Activated CD8-positive, alpha-beta T cell treated with anti-CD3 and anti-CD28 coated beads for 36 hours (primary cell): ENCODE measurements at regions of chr9 and their contacts with region 1.

Region 1: GRCh38 chr9:76302947-76303940 is 91.0 kb downstream of the RFK start:
- DNase-seq: peak; percentile 22
- ATAC-seq: peak; percentile 58
- H3K4me3 Mint-ChIP-seq: no peak overlapping the region
- H3K27ac Mint-ChIP-seq: no peak overlapping the region
- H3K4me1 Mint-ChIP-seq: no peaks in the 10 kb centered on the region
- H3K27me3 Mint-ChIP-seq: peaks cover 9% of the 10 kb centered on the region
- CTCF ChIP-seq: peak; percentile 73

Region 2: DNA sequence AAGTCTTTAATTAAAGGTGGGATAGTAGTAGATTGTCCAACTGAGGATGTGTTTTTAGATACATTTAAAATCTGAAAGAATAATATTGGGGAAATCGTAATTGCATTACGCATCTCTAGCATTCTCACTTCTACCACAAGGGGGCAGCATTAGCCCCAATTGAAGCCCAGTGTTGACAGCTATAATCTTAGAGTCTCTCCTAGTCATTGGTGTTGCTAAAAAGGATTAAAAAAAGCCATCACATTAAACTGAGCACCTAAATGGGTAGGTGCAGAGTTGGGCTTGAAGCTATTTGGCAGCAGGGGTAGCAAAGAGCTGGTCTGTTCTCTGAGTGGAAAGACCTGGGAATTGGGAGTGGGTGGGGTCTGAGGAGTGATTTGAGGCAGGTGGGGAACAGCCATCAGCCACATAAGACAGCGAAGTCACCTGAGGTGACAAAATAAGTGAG is 1037.7 kb before region 1 on chr9:
- CTCF ChIA-PET with region 1: interaction called, 14 read pairs
- POLR2A ChIA-PET with region 1: no interaction called
- intact Hi-C with region 1: loop called (anchors 5 kb)
- DNase-seq: peak; percentile 68
- ATAC-seq: peak; percentile 64
- H3K4me3 Mint-ChIP-seq: no peak overlapping the region
- H3K27ac Mint-ChIP-seq: no peak overlapping the region
- H3K4me1 Mint-ChIP-seq: no peaks in the 10 kb centered on the region
- H3K27me3 Mint-ChIP-seq: no peaks in the 10 kb centered on the region
- CTCF ChIP-seq: peak; percentile 80

Region 3: DNA sequence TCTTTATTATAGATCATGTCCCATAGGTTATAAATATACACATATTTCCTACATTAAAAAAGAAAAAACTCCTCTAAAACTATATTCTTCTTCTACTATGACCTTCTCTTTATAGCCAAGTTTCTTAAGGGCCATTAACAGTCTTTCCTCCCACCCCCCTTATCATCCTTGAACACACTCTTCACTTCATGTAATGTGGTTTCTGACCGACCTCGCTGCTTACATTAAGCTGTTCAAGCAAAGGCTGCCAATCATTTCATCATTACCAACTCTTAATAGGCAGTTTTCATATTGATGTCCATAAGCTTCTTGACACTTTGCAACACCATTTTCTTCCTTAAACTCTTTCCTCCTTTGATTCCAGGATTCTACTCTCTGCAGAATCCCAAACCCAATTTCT is 695.7 kb before region 1 on chr9:
- CTCF ChIA-PET with region 1: no interaction called
- POLR2A ChIA-PET with region 1: no interaction called
- intact Hi-C with region 1: no loop called
- DNase-seq: no peak
- ATAC-seq: no peak
- H3K4me3 Mint-ChIP-seq: no peak overlapping the region
- H3K27ac Mint-ChIP-seq: no peak overlapping the region
- H3K4me1 Mint-ChIP-seq: no peaks in the 10 kb centered on the region
- H3K27me3 Mint-ChIP-seq: peaks cover 14% of the 10 kb centered on the region
- CTCF ChIP-seq: no peak

Region 4: GRCh38 chr9:75866273-75866871 is 436.9 kb before region 1 on chr9:
- CTCF ChIA-PET with region 1: interaction called, 34 read pairs
- POLR2A ChIA-PET with region 1: interaction called, 3 read pairs
- intact Hi-C with region 1: loop called (anchors 10 kb)
- DNase-seq: peak; percentile 71
- ATAC-seq: peak; percentile 30
- H3K4me3 Mint-ChIP-seq: no peak overlapping the region
- H3K27ac Mint-ChIP-seq: no peak overlapping the region
- H3K4me1 Mint-ChIP-seq: peaks cover 18% of the 10 kb centered on the region
- H3K27me3 Mint-ChIP-seq: no peaks in the 10 kb centered on the region
- CTCF ChIP-seq: peak; percentile 76

Region 5: DNA sequence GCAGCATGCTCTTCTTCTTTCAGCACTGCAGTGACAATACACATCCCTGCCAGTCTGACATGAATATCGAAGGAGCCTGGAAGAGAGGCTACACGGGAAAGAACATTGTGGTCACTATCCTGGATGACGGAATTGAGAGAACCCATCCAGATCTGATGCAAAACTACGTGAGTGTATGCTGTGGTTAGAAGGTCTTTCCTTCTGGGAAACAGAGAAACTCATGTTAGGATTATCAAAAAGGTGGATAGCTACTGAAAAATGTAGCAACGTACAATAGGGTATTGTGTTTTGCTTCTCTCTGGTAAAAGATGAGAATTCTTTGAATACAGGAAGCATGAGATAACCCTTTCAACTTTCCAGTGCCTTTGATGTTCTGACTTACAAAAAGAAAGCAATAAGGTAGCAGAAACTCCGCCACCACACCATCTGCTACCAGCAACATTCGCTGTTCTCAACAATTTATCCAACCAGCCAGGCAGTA is 279.5 kb before region 1 on chr9:
- CTCF ChIA-PET with region 1: no interaction called
- POLR2A ChIA-PET with region 1: no interaction called
- intact Hi-C with region 1: loop called (anchors 10 kb)
- DNase-seq: peak; percentile 68
- ATAC-seq: peak; percentile 76
- H3K4me3 Mint-ChIP-seq: peak overlapping the region; percentile 65
- H3K27ac Mint-ChIP-seq: peak overlapping the region; percentile 77
- H3K4me1 Mint-ChIP-seq: peaks cover 86% of the 10 kb centered on the region
- H3K27me3 Mint-ChIP-seq: no peaks in the 10 kb centered on the region
- CTCF ChIP-seq: no peak

Region 6: DNA sequence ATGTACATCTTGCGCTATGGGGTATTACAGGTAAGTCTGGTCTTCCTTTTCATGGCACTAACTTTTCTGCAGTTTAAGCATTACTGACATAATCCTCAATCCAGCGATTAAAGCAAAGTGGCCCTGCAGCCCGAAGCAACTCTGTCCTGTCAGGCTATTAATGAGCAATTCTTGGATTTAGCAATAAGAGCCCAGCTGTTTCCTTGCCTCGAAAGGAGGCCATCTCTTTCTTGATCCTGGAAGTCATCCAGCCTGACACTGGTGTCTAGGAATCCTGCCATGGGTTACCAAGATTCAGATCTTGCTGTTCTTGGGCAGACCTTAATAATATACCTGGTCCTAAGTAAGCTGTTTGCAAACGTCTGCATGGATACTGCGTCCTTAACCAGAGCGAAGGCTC is 11.0 kb before region 1 on chr9:
- CTCF ChIA-PET with region 1: interaction called, 24 read pairs
- POLR2A ChIA-PET with region 1: no interaction called
- intact Hi-C with region 1: no loop called
- DNase-seq: no peak
- ATAC-seq: no peak
- H3K4me3 Mint-ChIP-seq: no peak overlapping the region
- H3K27ac Mint-ChIP-seq: no peak overlapping the region
- H3K4me1 Mint-ChIP-seq: peaks cover under 1% of the 10 kb centered on the region
- H3K27me3 Mint-ChIP-seq: no peaks in the 10 kb centered on the region
- CTCF ChIP-seq: no peak

Region 7: GRCh38 chr9:76365028-76365427 is 61.8 kb after region 1 on chr9:
- CTCF ChIA-PET with region 1: no interaction called
- POLR2A ChIA-PET with region 1: no interaction called
- intact Hi-C with region 1: no loop called
- DNase-seq: no peak
- ATAC-seq: no peak
- H3K4me3 Mint-ChIP-seq: no peak overlapping the region
- H3K27ac Mint-ChIP-seq: no peak overlapping the region
- H3K4me1 Mint-ChIP-seq: no peaks in the 10 kb centered on the region
- H3K27me3 Mint-ChIP-seq: no peaks in the 10 kb centered on the region
- CTCF ChIP-seq: no peak